OCI-LY7 (cell line): ENCODE measurements at regions of chr17 and their contacts with region 1.

Region 1: DNA sequence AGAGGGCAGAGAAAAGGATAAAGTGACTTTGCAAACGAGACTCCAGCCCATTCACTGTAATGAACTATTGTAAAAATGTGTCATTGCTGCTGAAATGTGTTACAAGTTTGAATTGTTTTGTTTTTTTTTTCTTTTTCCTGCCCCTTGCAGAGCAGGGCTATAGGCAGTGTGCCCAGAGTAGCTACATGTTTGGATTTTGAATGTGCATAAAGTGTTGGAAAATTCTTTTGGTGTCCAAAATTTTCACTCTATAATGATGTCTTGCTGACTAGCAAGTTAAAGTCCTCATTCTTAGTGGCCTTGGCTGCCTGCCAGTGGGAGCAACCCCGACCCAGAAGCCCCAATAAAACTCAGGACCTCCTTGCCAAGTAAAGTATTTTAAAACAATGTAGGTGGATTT is 66.5 kb downstream of the IGF2BP1 start:
- DNase-seq: no peak
- H3K4me3 ChIP-seq: no peak overlapping the region
- H3K27ac ChIP-seq: no peak overlapping the region
- H3K4me1 ChIP-seq: no peaks in the 10 kb centered on the region
- CTCF ChIP-seq: no peak

Region 2: GRCh38 chr17:49230636-49231562 is 167.2 kb after region 1 on chr17 and contains the start of gene PHOSPHO1:
- CTCF ChIA-PET with region 1: no interaction called
- POLR2A ChIA-PET with region 1: no interaction called
- intact Hi-C with region 1: loop called (anchors 2 kb)
- DNase-seq: peak; percentile 90
- H3K4me3 ChIP-seq: peak within 1 kb of the TSS; percentile 67
- H3K27ac ChIP-seq: no peak within 1 kb of the TSS
- H3K4me1 ChIP-seq: peaks cover 9% of the 10 kb centered on the region
- CTCF ChIP-seq: no peak
- total RNA-seq, gene PHOSPHO1: not detected in 2 replicates